Panc1 (cell line): ENCODE measurements at regions of chr22 and their contacts with region 1.

Region 1: GRCh38 chr22:27639248-27640086 is 162.1 kb downstream of the MN1 start:
- DNase-seq: no peak
- ATAC-seq: no peak
- H3K4me3 ChIP-seq: no peak overlapping the region
- H3K27ac ChIP-seq: no peak overlapping the region
- H3K4me1 ChIP-seq: no peaks in the 10 kb centered on the region
- H3K27me3 ChIP-seq: no peaks in the 10 kb centered on the region
- CTCF ChIP-seq: no peak

Region 2: DNA sequence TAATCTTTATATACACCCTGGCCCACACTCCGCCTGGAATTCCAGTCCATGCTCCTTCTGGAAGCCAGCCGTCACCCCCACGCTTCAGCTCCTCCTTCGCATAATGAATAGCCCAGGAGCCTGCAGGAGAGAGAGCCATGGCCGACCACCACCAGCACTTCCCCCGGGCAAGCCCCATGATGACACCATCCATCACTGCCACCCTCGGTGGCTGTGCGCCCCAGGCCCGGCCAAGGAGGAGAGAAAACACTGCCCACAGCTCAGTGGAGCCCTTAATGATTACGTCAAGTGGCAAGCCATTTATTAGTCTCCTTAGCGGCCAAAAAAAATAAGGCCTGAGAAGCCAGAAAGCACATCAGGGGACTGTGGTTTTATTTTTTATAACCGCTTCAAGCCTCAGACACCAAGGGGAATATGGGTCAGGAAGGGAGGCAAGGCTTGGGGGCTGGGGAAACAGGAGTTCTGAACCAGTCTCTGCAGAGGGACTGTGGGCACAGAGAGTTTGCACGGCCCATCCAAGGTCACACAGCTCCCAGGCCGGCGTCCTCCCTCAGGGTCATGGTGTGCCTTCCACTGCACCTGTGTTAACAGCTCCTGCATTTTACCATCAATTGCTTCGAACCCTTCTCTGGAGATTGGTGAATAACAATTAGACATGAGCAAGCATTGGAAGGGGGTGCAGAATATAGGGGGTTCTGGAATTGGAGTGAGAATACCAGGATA is 27.8 kb after region 1 on chr22:
- CTCF ChIA-PET with region 1: interaction called, 12 read pairs
- POLR2A ChIA-PET with region 1: no interaction called
- in situ Hi-C with region 1: no loop called
- intact Hi-C with region 1: no loop called
- DNase-seq: no peak
- ATAC-seq: no peak
- H3K4me3 ChIP-seq: no peak overlapping the region
- H3K27ac ChIP-seq: no peak overlapping the region
- H3K4me1 ChIP-seq: no peaks in the 10 kb centered on the region
- H3K27me3 ChIP-seq: no peaks in the 10 kb centered on the region
- CTCF ChIP-seq: no peak